A673 (cell line): ENCODE measurements at regions of chr1 and their contacts with region 1.

Region 1: GRCh38 chr1:109213785-109214468 is at the start of gene SARS1:
- DNase-seq: peak; percentile 95
- H3K4me3 ChIP-seq: peak within 1 kb of the TSS; percentile 62
- H3K27ac ChIP-seq: peak within 1 kb of the TSS; percentile 91
- H3K4me1 ChIP-seq: peaks cover 23% of the 10 kb centered on the region
- H3K27me3 ChIP-seq: no peaks in the 10 kb centered on the region
- CTCF ChIP-seq: no peak
- total RNA-seq, gene SARS1: 259 and 320 TPM in 2 replicates

Region 2: DNA sequence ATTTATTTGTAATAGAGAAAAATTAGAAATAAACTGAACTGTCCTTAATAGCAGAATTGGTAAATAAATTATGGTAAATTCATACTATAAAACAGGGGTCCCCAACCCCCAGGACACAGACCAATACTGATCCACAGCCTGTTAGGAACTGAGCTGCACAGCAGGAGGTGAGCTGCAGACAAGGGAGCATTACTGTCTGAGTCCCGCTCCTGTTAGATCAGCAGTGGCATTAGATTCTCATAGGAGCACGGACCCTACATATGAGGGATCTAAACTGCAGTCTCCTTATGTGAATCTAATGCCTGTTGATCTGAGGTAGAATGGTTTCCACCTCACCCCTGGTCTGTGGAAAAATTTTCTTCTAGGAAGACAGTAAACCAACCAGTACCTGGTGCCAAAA is 179.5 kb before region 1 on chr1:
- CTCF ChIA-PET with region 1: no interaction called
- POLR2A ChIA-PET with region 1: interaction called, 17 read pairs
- intact Hi-C with region 1: no loop called
- DNase-seq: no peak
- H3K4me3 ChIP-seq: no peak overlapping the region
- H3K27ac ChIP-seq: no peak overlapping the region
- H3K4me1 ChIP-seq: peaks cover 5% of the 10 kb centered on the region
- H3K27me3 ChIP-seq: no peaks in the 10 kb centered on the region
- CTCF ChIP-seq: no peak

Region 3: DNA sequence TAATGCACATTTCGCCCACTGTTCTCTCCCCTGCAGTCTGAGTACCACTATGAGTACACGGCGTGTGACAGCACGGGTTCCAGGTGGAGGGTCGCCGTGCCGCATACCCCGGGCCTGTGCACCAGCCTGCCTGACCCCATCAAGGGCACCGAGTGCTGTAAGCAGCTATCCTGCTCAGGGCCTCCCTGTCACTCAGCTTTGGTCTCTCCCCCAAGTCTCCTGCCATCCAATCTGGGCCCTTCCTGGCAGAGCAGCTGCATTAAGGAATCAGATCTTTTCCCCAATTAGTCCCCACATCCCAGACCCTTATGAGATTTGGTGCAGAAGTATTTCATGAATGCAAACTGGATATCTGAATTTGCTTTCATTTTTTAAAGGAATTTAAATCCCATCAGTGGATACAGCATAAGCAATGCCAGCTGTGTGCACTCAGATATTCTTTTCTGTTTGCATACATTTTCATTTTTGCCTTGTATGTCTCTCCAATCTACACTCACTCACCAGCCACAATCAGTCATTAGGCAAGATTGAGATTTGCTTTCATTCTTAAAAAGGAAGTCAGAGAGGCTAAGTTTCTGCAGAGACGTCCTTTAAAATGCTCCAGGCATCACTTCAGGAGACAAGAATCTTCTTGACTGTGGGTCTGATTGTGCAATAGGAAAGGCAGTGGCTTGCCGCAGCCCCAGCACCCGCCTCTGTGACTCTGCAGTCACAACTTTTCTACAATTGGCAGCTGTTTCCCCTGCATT is 51.9 kb before region 1 on chr1:
- CTCF ChIA-PET with region 1: no interaction called
- POLR2A ChIA-PET with region 1: no interaction called
- intact Hi-C with region 1: no loop called
- DNase-seq: peak; percentile 79
- H3K4me3 ChIP-seq: no peak overlapping the region
- H3K27ac ChIP-seq: peak overlapping the region; percentile 55
- H3K4me1 ChIP-seq: peaks cover 23% of the 10 kb centered on the region
- H3K27me3 ChIP-seq: no peaks in the 10 kb centered on the region
- CTCF ChIP-seq: no peak

Region 4: DNA sequence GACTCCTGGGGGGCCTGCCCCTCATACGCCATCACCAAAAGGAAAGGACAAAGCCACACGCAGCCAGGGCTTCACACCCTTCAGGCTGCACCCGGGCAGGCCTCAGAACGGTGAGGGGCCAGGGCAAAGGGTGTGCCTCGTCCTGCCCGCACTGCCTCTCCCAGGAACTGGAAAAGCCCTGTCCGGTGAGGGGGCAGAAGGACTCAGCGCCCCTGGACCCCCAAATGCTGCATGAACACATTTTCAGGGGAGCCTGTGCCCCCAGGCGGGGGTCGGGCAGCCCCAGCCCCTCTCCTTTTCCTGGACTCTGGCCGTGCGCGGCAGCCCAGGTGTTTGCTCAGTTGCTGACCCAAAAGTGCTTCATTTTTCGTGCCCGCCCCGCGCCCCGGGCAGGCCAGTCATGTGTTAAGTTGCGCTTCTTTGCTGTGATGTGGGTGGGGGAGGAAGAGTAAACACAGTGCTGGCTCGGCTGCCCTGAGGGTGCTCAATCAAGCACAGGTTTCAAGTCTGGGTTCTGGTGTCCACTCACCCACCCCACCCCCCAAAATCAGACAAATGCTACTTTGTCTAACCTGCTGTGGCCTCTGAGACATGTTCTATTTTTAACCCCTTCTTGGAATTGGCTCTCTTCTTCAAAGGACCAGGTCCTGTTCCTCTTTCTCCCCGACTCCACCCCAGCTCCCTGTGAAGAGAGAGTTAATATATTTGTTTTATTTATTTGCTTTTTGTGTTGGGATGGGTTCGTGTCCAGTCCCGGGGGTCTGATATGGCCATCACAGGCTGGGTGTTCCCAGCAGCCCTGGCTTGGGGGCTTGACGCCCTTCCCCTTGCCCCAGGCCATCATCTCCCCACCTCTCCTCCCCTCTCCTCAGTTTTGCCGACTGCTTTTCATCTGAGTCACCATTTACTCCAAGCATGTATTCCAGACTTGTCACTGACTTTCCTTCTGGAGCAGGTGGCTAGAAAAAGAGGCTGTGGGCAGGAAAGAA is 60.9 kb after region 1 on chr1:
- CTCF ChIA-PET with region 1: no interaction called
- POLR2A ChIA-PET with region 1: no interaction called
- intact Hi-C with region 1: no loop called
- DNase-seq: no peak
- H3K4me3 ChIP-seq: no peak overlapping the region
- H3K27ac ChIP-seq: no peak overlapping the region
- H3K4me1 ChIP-seq: no peaks in the 10 kb centered on the region
- H3K27me3 ChIP-seq: no peaks in the 10 kb centered on the region
- CTCF ChIP-seq: no peak